ENCODE measurements at regions of chr19 and their contacts with region 1.

Region 1: GRCh38 chr19:18043676-18044075 is 35.7 kb downstream of the ARRDC2 start:
- DNase-seq: no peak
- H3K4me3 ChIP-seq: no peak overlapping the region
- H3K27ac ChIP-seq: no peak overlapping the region
- H3K4me1 ChIP-seq: peaks cover 5 to 7% of the 10 kb centered on the region in 2 donors
- H3K27me3 ChIP-seq: no peaks in the 10 kb centered on the region
- CTCF ChIP-seq: no peak
- POLR2A ChIP-seq: no peak

Region 2: GRCh38 chr19:18776288-18776594 is 732.6 kb after region 1 on chr19:
- intact Hi-C with region 1: loop called (anchors 5 kb)
- DNase-seq: no peak
- H3K4me3 ChIP-seq: no peak overlapping the region
- H3K27ac ChIP-seq: no peak overlapping the region
- H3K4me1 ChIP-seq: no peaks in the 10 kb centered on the region
- H3K27me3 ChIP-seq: no peaks in the 10 kb centered on the region
- CTCF ChIP-seq: no peak
- POLR2A ChIP-seq: no peak